Activated CD8-positive, alpha-beta T cell treated with anti-CD3 and anti-CD28 coated beads for 36 hours (primary cell): ENCODE measurements at regions of chr2 and their contacts with region 1.

Region 1: GRCh38 chr2:100562732-100563720 is at the start of gene PDCL3:
- DNase-seq: peak; percentile 95
- ATAC-seq: peak; percentile 94
- H3K4me3 Mint-ChIP-seq: peak within 1 kb of the TSS; percentile 87
- H3K27ac Mint-ChIP-seq: peak within 1 kb of the TSS; percentile 98
- H3K4me1 Mint-ChIP-seq: peaks cover 31% of the 10 kb centered on the region
- H3K27me3 Mint-ChIP-seq: no peaks in the 10 kb centered on the region
- CTCF ChIP-seq: no peak
- total RNA-seq, gene PDCL3: 31.9 to 35.7 TPM

Region 2: GRCh38 chr2:100416935-100417710 is 145.9 kb before region 1 on chr2 and contains the start of gene CHST10:
- CTCF ChIA-PET with region 1: no interaction called
- POLR2A ChIA-PET with region 1: interaction called, 3 read pairs
- intact Hi-C with region 1: loop called (anchors 5 kb)
- DNase-seq: peak; percentile 65
- ATAC-seq: peak; percentile 97
- H3K4me3 Mint-ChIP-seq: peak within 1 kb of the TSS; percentile 81
- H3K27ac Mint-ChIP-seq: peak within 1 kb of the TSS; percentile 85
- H3K4me1 Mint-ChIP-seq: peaks cover 25% of the 10 kb centered on the region
- H3K27me3 Mint-ChIP-seq: no peaks in the 10 kb centered on the region
- CTCF ChIP-seq: no peak
- total RNA-seq, gene CHST10: 9.5 to 10.5 TPM

Region 3: DNA sequence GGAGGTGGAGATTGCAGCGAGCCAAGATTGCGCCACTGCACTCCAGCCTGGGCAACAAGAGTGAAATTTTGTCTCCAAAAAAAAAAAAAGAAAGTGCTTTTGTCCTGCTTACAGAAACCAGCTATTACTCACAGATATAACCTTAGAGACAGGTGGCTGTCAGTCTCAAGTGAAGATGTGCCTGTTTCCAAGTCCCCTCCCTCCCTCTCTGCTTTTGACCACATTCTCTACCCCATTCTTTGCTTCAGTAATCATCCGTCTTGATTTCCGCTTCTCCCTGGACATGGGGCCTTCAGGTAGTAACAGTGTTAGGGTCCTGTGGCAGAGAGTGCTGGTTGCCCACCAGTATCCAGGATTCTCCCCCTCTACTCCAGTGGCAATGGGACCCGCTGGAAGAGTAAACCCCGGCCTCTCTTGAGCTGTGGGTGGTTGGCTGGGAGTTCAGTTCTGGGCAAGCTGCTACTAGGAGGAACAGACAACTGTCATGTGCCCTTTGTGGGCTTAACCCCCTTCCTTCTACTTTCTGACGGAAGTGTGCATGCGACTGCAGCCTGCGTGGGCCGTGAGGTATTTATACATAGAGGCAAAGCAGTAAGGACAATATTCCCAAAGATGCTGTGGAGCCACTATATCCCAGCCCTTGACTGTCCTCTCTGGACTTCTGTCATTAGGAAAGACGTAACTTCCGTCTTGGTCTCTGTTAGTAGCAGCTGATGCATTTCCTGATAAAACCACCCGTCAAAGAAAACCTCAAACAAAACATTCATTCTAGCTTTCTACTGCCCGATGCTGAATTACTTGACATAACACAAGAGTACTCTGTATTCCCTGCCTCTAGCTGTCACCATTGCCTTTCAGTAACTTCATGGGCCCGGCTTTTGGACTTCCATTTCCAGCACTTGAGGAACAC is 17.6 kb after region 1 on chr2:
- CTCF ChIA-PET with region 1: interaction called, 3 read pairs
- POLR2A ChIA-PET with region 1: interaction called, 24 read pairs
- intact Hi-C with region 1: no loop called
- DNase-seq: peak; percentile 74
- ATAC-seq: peak; percentile 81
- H3K4me3 Mint-ChIP-seq: peak overlapping the region; percentile 57
- H3K27ac Mint-ChIP-seq: peak overlapping the region; percentile 96
- H3K4me1 Mint-ChIP-seq: peaks cover 39% of the 10 kb centered on the region
- H3K27me3 Mint-ChIP-seq: no peaks in the 10 kb centered on the region
- CTCF ChIP-seq: no peak

Region 4: DNA sequence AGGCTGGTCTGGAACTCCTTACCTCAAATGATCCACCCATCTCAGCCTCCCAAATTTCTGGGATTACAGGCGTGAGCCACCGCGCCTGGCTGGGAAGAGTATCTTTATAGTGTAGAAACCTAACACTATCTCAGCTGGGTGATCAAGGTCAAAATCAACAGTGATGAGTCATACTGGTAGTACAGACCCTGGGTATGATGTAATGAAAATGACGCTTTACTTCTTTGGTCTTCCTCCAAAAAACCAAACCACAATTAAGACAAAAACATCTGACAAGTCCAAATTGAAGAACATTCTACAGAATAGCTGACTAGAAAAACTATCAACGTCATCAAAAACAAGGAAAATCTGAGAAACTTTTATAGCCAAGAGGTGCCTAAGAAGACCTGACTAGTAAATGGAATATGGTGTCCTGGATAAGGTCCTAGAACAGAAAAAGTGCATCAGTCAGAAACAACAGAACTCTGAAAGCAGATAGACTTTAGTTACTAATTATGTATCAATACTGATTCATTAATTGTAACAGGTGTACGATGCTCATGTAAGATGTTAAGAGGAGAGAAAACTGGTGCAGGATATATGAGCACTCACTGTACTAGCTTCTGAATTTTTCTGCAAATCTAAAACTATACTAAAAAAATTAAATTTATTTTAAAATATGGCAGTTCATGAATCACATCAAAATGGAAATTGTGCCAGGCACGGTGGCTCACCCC is 25.2 kb after region 1 on chr2:
- CTCF ChIA-PET with region 1: interaction called, 3 read pairs
- POLR2A ChIA-PET with region 1: interaction called, 10 read pairs
- intact Hi-C with region 1: no loop called
- DNase-seq: peak; percentile 25
- ATAC-seq: peak; percentile 84
- H3K4me3 Mint-ChIP-seq: peak overlapping the region; percentile 3
- H3K27ac Mint-ChIP-seq: peak overlapping the region; percentile 78
- H3K4me1 Mint-ChIP-seq: peaks cover 35% of the 10 kb centered on the region
- H3K27me3 Mint-ChIP-seq: no peaks in the 10 kb centered on the region
- CTCF ChIP-seq: no peak

Region 5: GRCh38 chr2:100640431-100641124 is 77.6 kb after region 1 on chr2:
- CTCF ChIA-PET with region 1: no interaction called
- POLR2A ChIA-PET with region 1: no interaction called
- intact Hi-C with region 1: no loop called
- DNase-seq: no peak
- ATAC-seq: no peak
- H3K4me3 Mint-ChIP-seq: no peak overlapping the region
- H3K27ac Mint-ChIP-seq: no peak overlapping the region
- H3K4me1 Mint-ChIP-seq: peaks cover 37% of the 10 kb centered on the region
- H3K27me3 Mint-ChIP-seq: no peaks in the 10 kb centered on the region
- CTCF ChIP-seq: no peak

Region 6: GRCh38 chr2:100786297-100786658 is 223.3 kb after region 1 on chr2:
- CTCF ChIA-PET with region 1: no interaction called
- POLR2A ChIA-PET with region 1: no interaction called
- intact Hi-C with region 1: no loop called
- DNase-seq: no peak
- ATAC-seq: no peak
- H3K4me3 Mint-ChIP-seq: no peak overlapping the region
- H3K27ac Mint-ChIP-seq: no peak overlapping the region
- H3K4me1 Mint-ChIP-seq: peaks cover 2% of the 10 kb centered on the region
- H3K27me3 Mint-ChIP-seq: no peaks in the 10 kb centered on the region
- CTCF ChIP-seq: no peak

Region 7: DNA sequence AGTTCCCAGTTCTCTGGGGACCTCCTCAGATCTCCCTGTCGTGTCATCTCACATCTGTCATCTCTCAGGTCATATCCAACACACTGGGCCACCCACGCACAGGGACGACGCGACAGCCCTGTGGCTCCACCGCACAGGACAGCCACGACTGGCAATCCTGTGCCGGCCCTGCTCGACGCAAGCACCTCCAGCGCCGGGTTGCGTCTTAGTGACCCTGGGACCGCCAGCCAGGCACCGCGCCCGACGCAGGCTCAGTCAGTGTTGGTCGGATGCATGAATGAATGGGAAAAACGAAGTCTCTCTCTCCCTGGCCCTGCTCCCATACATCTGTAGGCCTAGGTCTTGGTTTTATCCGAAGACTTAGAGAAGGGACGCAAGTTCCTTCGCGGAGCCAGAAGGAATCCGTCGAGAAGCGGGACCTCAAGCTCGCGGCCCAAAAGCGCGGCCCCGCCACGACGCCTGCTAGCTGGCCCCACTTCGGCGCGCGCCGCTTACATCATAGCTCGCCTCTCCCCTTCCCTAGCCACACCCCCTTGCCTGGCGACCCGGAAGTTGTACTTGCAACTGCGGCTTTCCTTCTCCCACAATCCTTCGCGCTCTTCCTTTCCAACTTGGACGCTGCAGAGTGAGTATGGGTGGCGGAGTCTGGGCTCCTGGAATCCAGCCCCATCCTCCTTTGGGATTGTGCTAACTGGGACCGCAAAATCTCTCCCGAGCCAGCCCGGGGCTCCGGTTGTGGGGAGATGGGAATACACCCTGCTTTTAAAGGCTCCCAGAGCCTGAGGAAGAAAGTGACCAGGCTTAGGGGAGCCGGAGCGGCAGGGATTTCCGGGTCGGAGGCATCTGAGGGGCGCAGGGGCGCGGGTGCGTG is 438.9 kb after region 1 on chr2 and contains the start of gene RPL31:
- CTCF ChIA-PET with region 1: no interaction called
- POLR2A ChIA-PET with region 1: interaction called, 17 read pairs
- intact Hi-C with region 1: no loop called
- DNase-seq: peak; percentile 98
- ATAC-seq: peak; percentile 94
- H3K4me3 Mint-ChIP-seq: peak within 1 kb of the TSS; percentile 97
- H3K27ac Mint-ChIP-seq: peak within 1 kb of the TSS; percentile 98
- H3K4me1 Mint-ChIP-seq: peaks cover 45% of the 10 kb centered on the region
- H3K27me3 Mint-ChIP-seq: no peaks in the 10 kb centered on the region
- CTCF ChIP-seq: no peak
- total RNA-seq, gene RPL31: 1,667 to 1,859 TPM